OCI-LY7 (cell line): ENCODE measurements at regions of chr5 and their contacts with region 1.

Region 1: DNA sequence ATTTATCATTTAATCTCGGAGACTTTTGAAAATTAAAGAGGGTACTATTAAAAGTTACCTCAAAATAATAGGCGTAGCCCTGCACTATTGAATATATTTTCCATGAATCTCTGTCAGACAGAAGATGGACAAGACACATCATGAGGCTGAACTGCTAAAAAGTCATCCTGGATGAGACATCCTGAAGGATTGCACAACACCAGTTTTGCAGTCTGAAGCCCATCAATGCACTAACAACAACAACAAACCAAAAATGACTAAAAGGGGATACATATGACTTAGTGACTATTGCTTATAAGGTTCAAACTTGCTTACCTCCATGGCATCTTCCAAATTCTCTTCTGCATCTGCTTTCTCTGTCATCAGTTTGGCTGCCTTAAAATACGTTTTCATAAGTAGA is 15.7 kb downstream of the LMBRD2 start:
- DNase-seq: no peak
- H3K4me3 ChIP-seq: no peak overlapping the region
- H3K27ac ChIP-seq: no peak overlapping the region
- H3K4me1 ChIP-seq: no peaks in the 10 kb centered on the region
- CTCF ChIP-seq: no peak

Region 2: DNA sequence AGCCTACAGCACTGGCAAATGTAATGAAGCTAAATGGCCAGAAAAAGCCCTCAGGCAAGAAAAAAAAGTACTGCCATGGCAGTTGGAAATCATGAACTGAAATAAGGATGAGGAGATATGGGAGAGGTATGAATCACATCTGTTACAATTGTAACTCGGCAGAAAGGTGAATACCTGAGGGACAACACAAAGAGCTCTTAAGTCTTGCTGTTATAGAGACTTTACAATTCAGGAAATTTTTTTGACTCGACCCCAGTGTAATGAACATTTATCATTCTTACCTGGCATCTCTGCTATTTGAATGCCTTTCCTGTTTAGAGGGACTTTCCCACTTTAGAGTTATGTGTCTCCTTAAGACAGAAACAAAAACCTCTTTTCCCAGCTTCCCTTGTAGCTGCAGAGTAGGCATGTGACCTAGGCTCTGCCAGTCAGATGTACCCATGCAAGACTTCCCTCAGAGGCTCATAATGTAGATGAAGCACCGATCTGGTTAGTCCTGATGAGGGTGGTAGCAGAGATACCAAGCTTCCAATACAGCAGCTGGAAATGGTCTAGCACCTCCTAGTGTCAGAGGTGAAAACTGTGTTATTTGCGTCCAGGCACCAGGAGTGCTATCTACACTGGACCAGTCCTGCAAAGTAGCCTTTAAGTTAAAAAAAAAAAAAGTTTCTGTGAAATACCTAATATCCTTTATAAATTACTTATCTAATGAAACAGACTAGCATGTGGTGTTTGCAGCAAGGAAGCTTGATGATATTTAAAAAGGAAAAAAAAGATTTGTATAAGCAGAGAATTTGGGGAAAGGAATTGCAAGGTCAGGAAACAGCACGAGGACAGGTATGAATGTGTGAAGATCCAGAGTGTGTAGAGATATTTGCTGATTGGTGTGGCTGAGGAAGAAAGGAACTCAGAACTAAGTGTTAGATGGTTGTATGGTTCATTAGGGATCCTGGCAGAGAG is 323.5 kb after region 1 on chr5:
- CTCF ChIA-PET with region 1: no interaction called
- POLR2A ChIA-PET with region 1: interaction called, 11 read pairs
- intact Hi-C with region 1: no loop called
- DNase-seq: peak; percentile 31
- H3K4me3 ChIP-seq: no peak overlapping the region
- H3K27ac ChIP-seq: no peak overlapping the region
- H3K4me1 ChIP-seq: no peaks in the 10 kb centered on the region
- CTCF ChIP-seq: peak; percentile 77